ENCODE measurements at regions of chr9 and their contacts with region 1.

Region 1: GRCh38 chr9:126611592-126612325 is 2.0 kb upstream of the LMX1B start:
- DNase-seq: peak; percentile 39 to 82 (median 58)
- H3K4me3 ChIP-seq: peak overlapping the region in 38 of 59 donors; percentile 7 to 54 (median 32)
- H3K27ac ChIP-seq: no peak overlapping the region
- H3K27me3 ChIP-seq: peaks cover 10 to 73% (median 62%) of the 10 kb centered on the region in 45 donors
- CTCF ChIP-seq: peak in 55 of 56 donors; percentile 48 to 90 (median 79)

Region 2: GRCh38 chr9:126599047-126599650 is 12.6 kb before region 1 on chr9:
- intact Hi-C with region 1: no loop called
- DNase-seq: peak in 2 of 10 donors; percentile 1 to 2
- H3K4me3 ChIP-seq: no peak overlapping the region
- H3K27ac ChIP-seq: no peak overlapping the region
- H3K27me3 ChIP-seq: peaks cover 0 to 7% (median 0%) of the 10 kb centered on the region in 45 donors
- CTCF ChIP-seq: peak in 1 of 56 donors; percentile 9

Region 3: GRCh38 chr9:126661521-126662220 is 49.9 kb after region 1 on chr9:
- intact Hi-C with region 1: no loop called
- DNase-seq: no peak
- H3K4me3 ChIP-seq: no peak overlapping the region
- H3K27ac ChIP-seq: no peak overlapping the region
- H3K27me3 ChIP-seq: peaks cover 0 to 33% (median 10%) of the 10 kb centered on the region in 45 donors
- CTCF ChIP-seq: no peak

Region 4: DNA sequence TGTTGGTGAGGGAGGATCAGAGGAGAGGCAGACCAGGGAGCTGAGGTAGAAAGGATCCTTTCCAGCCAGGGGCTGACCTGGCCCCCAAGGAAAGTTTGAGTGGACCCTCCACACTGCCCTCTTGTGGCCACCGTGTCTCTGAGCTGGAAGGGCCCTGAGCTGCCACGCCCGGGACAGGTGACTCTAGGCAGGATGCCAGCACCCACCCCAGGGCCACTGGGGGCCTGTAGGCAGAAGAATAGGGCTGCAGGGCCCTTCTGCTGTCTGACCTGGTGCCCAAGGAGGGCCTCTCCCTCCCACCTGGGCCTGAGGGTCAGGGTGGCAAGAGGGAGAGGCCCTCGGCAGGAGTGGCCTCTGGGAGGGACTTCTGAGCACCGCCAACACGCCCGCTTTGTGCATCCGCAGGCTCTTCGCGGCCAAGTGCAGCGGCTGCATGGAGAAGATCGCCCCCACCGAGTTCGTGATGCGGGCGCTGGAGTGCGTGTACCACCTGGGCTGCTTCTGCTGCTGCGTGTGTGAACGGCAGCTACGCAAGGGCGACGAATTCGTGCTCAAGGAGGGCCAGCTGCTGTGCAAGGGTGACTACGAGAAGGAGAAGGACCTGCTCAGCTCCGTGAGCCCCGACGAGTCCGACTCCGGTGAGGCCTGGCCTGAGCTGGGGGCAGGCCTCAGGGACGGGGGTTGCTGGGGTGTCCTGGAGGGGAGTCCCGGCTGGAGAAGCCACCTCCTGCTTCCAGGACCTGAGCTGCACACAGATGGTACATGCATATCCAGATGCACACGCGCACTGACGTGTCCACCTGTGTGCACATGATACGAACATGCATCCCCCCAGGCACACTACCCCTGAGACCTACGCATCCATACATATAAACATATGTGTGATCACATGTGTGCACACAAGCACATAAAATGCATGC is 78.9 kb after region 1 on chr9:
- intact Hi-C with region 1: loop called in 1 of 2 experiments (anchors 2 kb)
- DNase-seq: no peak
- H3K4me3 ChIP-seq: no peak overlapping the region
- H3K27ac ChIP-seq: no peak overlapping the region
- H3K27me3 ChIP-seq: peaks cover 0 to 17% (median 0%) of the 10 kb centered on the region in 45 donors
- CTCF ChIP-seq: peak in 54 of 56 donors; percentile 18 to 71 (median 54)